KBM-7 (cell line): ENCODE measurements at regions of chrX and their contacts with region 1.

Region 1: DNA sequence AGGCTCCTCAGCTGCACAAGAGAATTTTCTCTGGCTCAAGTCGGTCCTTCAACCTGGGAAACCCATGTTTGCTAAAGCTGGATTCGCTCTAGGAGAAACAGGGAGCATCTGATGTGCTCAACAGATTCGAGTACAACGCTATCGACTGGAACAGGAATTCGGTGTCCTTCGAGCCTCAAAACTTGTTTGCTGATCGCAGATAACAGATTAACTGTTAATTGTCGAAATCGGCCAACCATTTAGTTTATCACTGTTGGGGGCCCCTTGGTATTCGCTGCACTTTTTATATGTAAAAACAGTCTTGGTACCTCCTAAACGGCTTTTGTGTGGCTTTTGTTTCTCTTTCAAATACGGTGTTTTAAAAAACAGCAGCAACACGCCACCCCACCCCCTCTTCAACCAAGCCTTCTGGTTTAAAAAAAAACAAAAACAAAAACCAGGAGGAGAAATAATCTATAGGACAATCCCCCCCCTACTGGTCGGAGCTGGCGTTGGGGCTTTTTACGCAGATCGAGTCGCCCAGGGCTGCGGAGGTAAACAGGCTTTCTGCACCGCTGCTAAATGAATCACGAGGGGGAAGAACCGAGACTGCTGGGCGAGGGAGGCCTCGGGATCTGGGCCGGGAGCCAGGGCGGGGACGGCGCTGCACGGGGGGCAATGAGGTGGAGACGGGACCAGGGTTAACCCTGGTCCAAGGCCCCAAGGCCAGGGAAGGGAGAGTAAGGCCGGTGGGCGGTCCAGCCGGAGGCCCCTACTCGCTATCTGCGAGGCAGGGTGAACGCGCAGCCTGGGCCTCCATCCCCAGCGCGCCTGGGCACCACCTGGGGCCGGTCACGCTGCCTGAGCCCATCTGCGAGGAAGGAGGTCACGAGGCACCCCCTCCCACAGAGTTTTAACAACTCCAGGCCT is 71.7 kb upstream of the BCOR start:
- DNase-seq: peak; percentile 94

Region 2: DNA sequence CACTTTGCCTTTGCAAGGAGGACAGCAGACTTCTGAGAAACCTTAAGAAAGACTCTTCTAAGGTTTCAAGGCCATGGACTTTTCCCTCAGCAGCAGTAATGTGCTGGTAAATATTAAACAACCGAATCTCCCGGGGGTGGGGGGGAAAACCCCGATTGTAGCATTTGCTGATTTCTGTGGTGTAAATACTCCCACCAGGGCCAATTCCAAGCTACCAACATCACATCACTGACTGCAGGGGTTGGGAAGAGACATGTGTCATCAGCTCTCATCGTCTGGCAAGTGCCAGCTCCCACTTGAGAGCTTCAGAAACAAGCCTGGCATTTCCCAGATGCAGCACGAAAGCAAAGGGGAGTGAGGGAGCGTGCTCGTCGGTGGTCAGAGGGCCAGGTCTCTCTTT is 172.9 kb before region 1 on chrX:
- in situ Hi-C with region 1: no loop called
- DNase-seq: no peak

Region 3: GRCh38 chrX:40083120-40083978 is 86.1 kb before region 1 on chrX:
- in situ Hi-C with region 1: no loop called
- DNase-seq: peak; percentile 86

Region 4: DNA sequence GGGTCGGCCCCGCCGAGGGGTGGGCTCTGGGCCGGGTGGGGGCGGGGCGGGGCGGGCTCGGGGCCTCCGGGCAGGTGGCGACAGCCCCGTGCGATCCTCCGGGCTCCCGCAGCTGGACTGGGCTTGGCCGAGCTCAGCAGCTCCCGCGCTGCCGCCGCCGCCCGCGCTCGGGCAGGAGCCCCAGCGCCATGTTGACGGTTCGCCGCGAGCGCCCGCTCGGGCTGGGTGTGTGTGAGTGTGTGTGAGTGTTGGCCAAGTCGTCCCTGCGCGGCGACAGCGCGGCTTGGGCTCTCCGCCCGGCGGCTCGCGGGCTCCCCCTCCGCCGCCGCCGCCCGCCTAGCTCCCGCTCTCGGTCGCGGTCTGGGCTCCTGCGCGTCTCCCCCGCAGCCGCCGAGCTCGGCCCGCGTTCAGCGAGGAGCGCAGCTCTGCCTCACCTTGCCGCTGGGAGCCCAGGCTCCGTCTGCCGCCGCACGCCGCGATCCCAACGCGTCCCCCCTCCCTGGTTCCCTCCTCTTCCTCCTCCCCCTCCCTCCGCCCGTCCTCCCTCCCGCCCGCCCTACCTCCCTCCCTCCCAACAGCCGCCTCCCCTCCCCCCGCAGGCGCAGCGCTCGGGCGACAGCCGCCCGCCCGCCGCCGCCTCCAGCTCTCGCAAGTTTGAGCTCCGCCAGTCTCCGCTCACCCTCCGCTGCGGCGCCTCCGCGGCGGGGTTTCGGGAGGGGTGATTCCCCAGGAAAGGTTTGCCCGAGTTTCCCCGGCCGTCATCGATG is 71.8 kb before region 1 on chrX and contains the start of gene BCOR:
- in situ Hi-C with region 1: loop called (anchors 10 kb)
- DNase-seq: peak; percentile 73